ENCODE measurements at regions of chr1 and their contacts with region 1.

Region 1: GRCh38 chr1:31065310-31066217 is at the start of gene PUM1:
- DNase-seq: peak; percentile 99
- H3K4me3 ChIP-seq: peak within 1 kb of the TSS; percentile 71 to 88 (median 74)
- H3K27ac ChIP-seq: peak within 1 kb of the TSS; percentile 87 to 97 (median 94)
- H3K4me1 ChIP-seq: peaks cover 26 to 43% (median 38%) of the 10 kb centered on the region in 4 donors
- H3K27me3 ChIP-seq: no peaks in the 10 kb centered on the region
- CTCF ChIP-seq: peak in 2 of 3 experiments; percentile 23 to 33
- EP300 ChIP-seq: no peak
- POLR2A ChIP-seq: peak; percentile 43
- total RNA-seq, gene PUM1: 71.7 to 112 (median 83.0) TPM

Region 2: DNA sequence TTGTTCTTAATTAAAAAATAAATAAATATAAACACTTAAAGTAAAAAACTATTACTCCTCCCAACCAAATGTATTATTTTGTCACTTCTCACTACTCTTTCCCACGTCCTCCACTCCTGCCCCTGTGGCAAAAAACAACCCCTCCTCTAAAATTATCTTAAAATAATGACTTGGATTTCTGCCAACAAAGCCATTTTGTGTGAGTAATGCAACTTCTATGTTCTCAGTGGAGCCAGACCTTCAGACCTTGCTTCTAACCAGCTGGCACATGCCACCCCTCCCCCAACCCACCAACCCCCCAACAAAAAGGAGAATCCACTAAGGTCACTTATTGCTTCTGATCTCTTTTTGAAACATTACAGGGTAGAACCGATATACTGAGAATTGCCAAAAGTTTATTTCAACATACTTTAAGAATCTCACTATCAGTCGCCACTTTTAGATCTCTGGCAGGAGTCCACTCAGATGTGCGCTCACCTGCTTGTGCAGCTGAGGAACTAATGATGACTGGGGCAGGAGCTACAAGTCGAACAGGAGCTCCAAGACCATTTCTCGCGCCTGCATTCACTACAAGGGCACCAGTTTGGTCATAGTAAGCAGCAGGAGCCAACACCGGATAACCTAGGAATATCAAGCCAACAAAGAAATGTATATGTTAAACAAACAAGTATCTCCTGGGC is 98.7 kb before region 1 on chr1:
- intact Hi-C with region 1: loop called (anchors 5 kb)
- DNase-seq: no peak
- H3K4me3 ChIP-seq: no peak overlapping the region
- H3K27ac ChIP-seq: peak overlapping the region; percentile 28 to 58 (median 36)
- H3K4me1 ChIP-seq: peaks cover 32 to 38% (median 36%) of the 10 kb centered on the region in 4 donors
- H3K27me3 ChIP-seq: no peaks in the 10 kb centered on the region
- CTCF ChIP-seq: no peak
- EP300 ChIP-seq: no peak
- POLR2A ChIP-seq: no peak

Region 3: DNA sequence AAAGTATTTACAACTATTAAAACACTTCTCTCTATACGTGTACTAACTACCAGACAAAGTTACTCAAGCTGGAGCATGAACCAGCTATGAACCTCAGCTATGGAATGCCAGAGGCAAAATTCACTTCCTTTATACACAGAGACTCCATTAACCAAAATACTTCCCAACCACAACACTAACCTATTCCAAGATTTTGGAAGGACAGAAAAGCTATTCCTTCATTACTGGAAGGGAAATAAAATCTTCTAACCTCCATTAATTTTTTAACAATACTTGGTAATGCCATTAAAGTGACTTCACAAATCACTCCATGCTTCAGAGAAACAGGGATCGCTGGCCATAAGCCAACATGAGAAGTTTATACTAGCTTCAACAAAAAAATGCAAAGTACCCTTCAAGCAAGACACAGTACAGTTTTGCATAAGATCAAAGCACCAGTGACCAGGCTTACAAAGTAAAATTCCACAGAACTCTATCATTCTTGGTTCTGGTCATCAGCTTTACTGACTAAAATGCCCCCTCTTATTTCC is 58.0 kb before region 1 on chr1:
- intact Hi-C with region 1: loop called (anchors 5 kb)
- DNase-seq: no peak
- H3K4me3 ChIP-seq: no peak overlapping the region
- H3K27ac ChIP-seq: peak overlapping the region in 3 of 4 donors; percentile 20 to 35 (median 25)
- H3K4me1 ChIP-seq: peaks cover 42 to 61% (median 58%) of the 10 kb centered on the region in 4 donors
- H3K27me3 ChIP-seq: no peaks in the 10 kb centered on the region
- CTCF ChIP-seq: no peak
- EP300 ChIP-seq: no peak
- POLR2A ChIP-seq: no peak

Region 4: GRCh38 chr1:31038360-31038759 is 27.2 kb before region 1 on chr1:
- intact Hi-C with region 1: no loop called
- DNase-seq: no peak
- H3K4me3 ChIP-seq: no peak overlapping the region
- H3K27ac ChIP-seq: no peak overlapping the region
- H3K4me1 ChIP-seq: peaks cover 37 to 77% (median 59%) of the 10 kb centered on the region in 4 donors
- H3K27me3 ChIP-seq: no peaks in the 10 kb centered on the region
- CTCF ChIP-seq: no peak
- EP300 ChIP-seq: no peak
- POLR2A ChIP-seq: no peak

Region 5: GRCh38 chr1:31155216-31155841 is 89.8 kb after region 1 on chr1:
- intact Hi-C with region 1: loop called (anchors 10 kb)
- DNase-seq: no peak
- H3K4me3 ChIP-seq: peak overlapping the region; percentile 83 to 89 (median 86)
- H3K27ac ChIP-seq: peak overlapping the region; percentile 80 to 87 (median 83)
- H3K4me1 ChIP-seq: peaks cover 6 to 15% (median 12%) of the 10 kb centered on the region in 4 donors
- H3K27me3 ChIP-seq: no peaks in the 10 kb centered on the region
- CTCF ChIP-seq: peak; percentile 26 to 36 (median 31)
- EP300 ChIP-seq: no peak
- POLR2A ChIP-seq: no peak